ENCODE measurements at regions of chr7 and their contacts with region 1.

Region 1: DNA sequence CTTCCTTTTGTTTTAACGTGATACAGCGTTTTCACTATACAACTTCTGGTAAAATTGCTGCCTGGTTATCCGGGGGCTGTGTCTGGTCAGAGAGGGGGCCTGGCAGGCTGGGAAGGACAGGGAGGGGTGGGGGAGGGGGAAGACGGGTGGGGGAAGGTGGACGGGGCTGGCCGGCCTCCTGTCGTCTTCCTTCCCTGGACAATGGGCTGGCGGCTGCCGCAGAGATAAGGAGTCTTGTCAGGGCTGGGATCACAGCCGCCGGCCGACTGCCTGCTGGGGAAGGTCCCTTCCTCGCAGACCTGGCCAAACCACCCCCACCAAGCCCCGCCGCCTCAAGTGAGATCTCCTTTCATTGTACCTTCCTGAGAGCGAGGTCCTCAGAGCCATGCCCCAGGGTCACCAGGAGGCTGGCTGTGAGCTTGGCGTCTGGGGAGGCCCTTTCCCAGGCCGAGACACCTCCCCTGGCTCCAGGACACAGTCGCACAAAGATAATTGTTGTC is 151.2 kb upstream of the TNRC18 start:
- DNase-seq: peak; percentile 78
- H3K4me3 ChIP-seq: peak overlapping the region in 1 of 3 experiments; percentile 1
- H3K27ac ChIP-seq: peak overlapping the region; percentile 72
- H3K4me1 ChIP-seq: peaks cover 16% of the 10 kb centered on the region
- H3K27me3 ChIP-seq: no peaks in the 10 kb centered on the region
- CTCF ChIP-seq: no peak
- POLR2A ChIP-seq: no peak

Region 2: GRCh38 chr7:5396999-5397663 is 177.7 kb before region 1 on chr7:
- CTCF ChIA-PET with region 1: no interaction called
- POLR2A ChIA-PET with region 1: no interaction called
- dilution Hi-C with region 1: no loop called
- intact Hi-C with region 1: no loop called
- DNase-seq: peak; percentile 21
- H3K4me3 ChIP-seq: no peak overlapping the region
- H3K27ac ChIP-seq: no peak overlapping the region
- H3K4me1 ChIP-seq: no peaks in the 10 kb centered on the region
- H3K27me3 ChIP-seq: no peaks in the 10 kb centered on the region
- CTCF ChIP-seq: no peak
- POLR2A ChIP-seq: no peak

Region 3: GRCh38 chr7:5507013-5507412 is 67.8 kb before region 1 on chr7:
- CTCF ChIA-PET with region 1: no interaction called
- POLR2A ChIA-PET with region 1: no interaction called
- dilution Hi-C with region 1: no loop called
- intact Hi-C with region 1: no loop called
- DNase-seq: no peak
- H3K4me3 ChIP-seq: no peak overlapping the region
- H3K27ac ChIP-seq: no peak overlapping the region
- H3K4me1 ChIP-seq: peaks cover 14% of the 10 kb centered on the region
- H3K27me3 ChIP-seq: no peaks in the 10 kb centered on the region
- CTCF ChIP-seq: no peak
- POLR2A ChIP-seq: no peak

Region 4: DNA sequence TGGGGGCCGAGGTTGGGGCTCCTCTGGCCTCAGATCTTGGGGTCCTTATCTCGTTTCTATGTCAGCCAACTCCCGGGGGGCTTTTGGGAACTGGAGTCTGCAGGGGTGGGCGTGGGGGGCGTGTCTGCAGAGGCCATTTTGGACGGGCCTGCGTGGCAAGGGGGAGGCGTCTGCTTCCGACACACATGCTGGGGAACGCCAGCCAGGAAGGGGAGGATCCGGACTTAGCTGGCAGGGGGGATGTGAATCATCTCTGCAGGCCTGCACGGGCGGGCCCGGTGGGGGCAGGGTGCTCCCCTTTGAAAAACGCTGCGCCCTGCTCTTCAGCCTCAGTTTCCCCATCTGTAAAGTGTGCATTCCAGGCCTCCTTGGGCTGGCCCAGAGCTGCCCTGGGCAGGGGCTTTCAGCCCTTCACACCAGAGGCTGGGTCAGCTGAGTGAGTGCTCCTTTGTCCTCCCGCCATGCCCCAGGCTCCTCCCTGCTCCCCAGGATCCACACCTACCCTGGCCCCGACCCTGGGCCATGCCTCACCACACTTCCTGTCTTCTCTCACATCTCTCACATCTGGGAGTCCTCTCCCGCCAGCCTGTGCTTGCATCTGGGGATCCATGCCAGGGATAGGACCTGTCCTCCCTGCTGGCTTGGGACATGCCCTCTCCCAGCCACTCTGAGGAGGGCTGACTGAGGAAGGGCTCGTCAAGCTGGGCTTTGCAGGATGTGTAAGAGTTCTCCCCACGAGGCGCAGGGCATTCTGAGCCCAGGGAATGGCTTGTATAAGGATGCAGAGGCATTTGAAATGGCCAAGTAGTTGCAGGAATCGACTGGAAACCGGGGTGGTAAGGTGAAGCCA is 21.5 kb after region 1 on chr7:
- CTCF ChIA-PET with region 1: no interaction called
- POLR2A ChIA-PET with region 1: interaction called, 5 read pairs
- dilution Hi-C with region 1: no loop called
- intact Hi-C with region 1: loop called (anchors 1 kb)
- DNase-seq: peak; percentile 88
- H3K4me3 ChIP-seq: peak overlapping the region; percentile 20 to 93 (median 85)
- H3K27ac ChIP-seq: peak overlapping the region; percentile 72
- H3K4me1 ChIP-seq: peaks cover 41% of the 10 kb centered on the region
- H3K27me3 ChIP-seq: no peaks in the 10 kb centered on the region
- CTCF ChIP-seq: no peak
- POLR2A ChIP-seq: peak; percentile 82

Measured in endothelial cell of umbilical vein (primary cell).